ENCODE measurements at regions of chr16 and their contacts with region 1.

Region 1: GRCh38 chr16:11114366-11115164 is 141.4 kb downstream of the SOCS1 start:
- DNase-seq: peak in 4 of 9 experiments; percentile 18 to 70 (median 34)
- ATAC-seq: peak; percentile 72
- H3K4me3 ChIP-seq: peak overlapping the region in 1 of 2 experiments; percentile 11
- H3K4me3 Mint-ChIP-seq: peak overlapping the region; percentile 60
- H3K27ac ChIP-seq: peak overlapping the region in 1 of 2 experiments; percentile 40
- H3K27ac Mint-ChIP-seq: peak overlapping the region; percentile 53
- H3K4me1 ChIP-seq: peaks cover 22% of the 10 kb centered on the region
- H3K4me1 Mint-ChIP-seq: peaks cover 30% of the 10 kb centered on the region
- H3K27me3 ChIP-seq: no peaks in the 10 kb centered on the region
- H3K27me3 Mint-ChIP-seq: no peaks in the 10 kb centered on the region
- CTCF ChIP-seq: no peak

Region 2: DNA sequence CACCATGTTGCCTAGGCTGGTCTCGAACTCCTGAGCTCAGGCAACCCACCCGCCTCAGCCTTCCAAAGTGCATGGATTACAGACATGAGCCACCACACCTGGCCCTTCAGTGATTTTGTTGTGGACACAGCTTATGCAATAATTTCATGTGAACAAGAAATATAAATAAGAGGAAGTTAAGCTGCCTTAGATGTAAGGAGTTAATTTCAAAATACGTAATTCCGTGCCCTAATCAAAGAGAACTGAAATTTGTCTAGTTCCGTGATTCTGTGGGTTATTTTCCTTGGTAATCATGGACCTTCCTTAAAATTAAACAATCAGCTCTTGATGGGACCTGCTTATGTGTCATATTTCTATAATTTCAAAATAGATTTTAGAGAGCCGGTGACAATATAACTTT is 307.9 kb before region 1 on chr16:
- CTCF ChIA-PET with region 1: no interaction called
- POLR2A ChIA-PET with region 1: no interaction called
- intact Hi-C with region 1: no loop called
- DNase-seq: no peak
- ATAC-seq: no peak
- H3K4me3 ChIP-seq: no peak overlapping the region
- H3K4me3 Mint-ChIP-seq: no peak overlapping the region
- H3K27ac ChIP-seq: no peak overlapping the region
- H3K27ac Mint-ChIP-seq: no peak overlapping the region
- H3K4me1 ChIP-seq: no peaks in the 10 kb centered on the region
- H3K4me1 Mint-ChIP-seq: no peaks in the 10 kb centered on the region
- H3K27me3 ChIP-seq: no peaks in the 10 kb centered on the region
- H3K27me3 Mint-ChIP-seq: peaks cover 2% of the 10 kb centered on the region
- CTCF ChIP-seq: no peak

Region 3: GRCh38 chr16:10981697-10982216 is 132.8 kb before region 1 on chr16:
- CTCF ChIA-PET with region 1: no interaction called
- POLR2A ChIA-PET with region 1: no interaction called
- intact Hi-C with region 1: no loop called
- DNase-seq: peak in 3 of 9 experiments; percentile 21 to 34 (median 25)
- ATAC-seq: no peak
- H3K4me3 ChIP-seq: no peak overlapping the region
- H3K4me3 Mint-ChIP-seq: no peak overlapping the region
- H3K27ac ChIP-seq: no peak overlapping the region
- H3K27ac Mint-ChIP-seq: no peak overlapping the region
- H3K4me1 ChIP-seq: no peaks in the 10 kb centered on the region
- H3K4me1 Mint-ChIP-seq: peaks cover 8% of the 10 kb centered on the region
- H3K27me3 ChIP-seq: no peaks in the 10 kb centered on the region
- H3K27me3 Mint-ChIP-seq: no peaks in the 10 kb centered on the region
- CTCF ChIP-seq: no peak

Region 4: DNA sequence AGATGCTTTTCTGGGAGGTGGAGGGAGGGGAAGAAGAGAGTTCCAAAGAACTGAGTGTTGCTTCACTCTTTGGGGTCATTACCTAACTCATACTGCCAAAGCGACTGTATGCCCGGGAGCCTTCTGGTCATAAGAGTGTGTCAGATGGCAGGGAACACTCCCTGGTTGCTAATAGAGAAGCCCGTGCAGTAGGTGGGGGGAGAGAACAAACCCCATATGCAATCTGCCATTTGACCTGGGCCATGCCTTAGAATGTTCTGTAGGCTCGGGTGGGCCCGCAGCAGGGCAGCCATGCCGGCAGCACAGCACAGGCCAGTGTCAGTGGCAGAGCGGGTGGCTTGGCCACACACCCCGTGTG is 20.9 kb after region 1 on chr16:
- CTCF ChIA-PET with region 1: no interaction called
- POLR2A ChIA-PET with region 1: no interaction called
- intact Hi-C with region 1: loop called in 1 of 2 experiments (anchors 2 kb)
- DNase-seq: no peak
- ATAC-seq: no peak
- H3K4me3 ChIP-seq: no peak overlapping the region
- H3K4me3 Mint-ChIP-seq: no peak overlapping the region
- H3K27ac ChIP-seq: no peak overlapping the region
- H3K27ac Mint-ChIP-seq: no peak overlapping the region
- H3K4me1 ChIP-seq: peaks cover 28% of the 10 kb centered on the region
- H3K4me1 Mint-ChIP-seq: peaks cover 42% of the 10 kb centered on the region
- H3K27me3 ChIP-seq: no peaks in the 10 kb centered on the region
- H3K27me3 Mint-ChIP-seq: no peaks in the 10 kb centered on the region
- CTCF ChIP-seq: no peak

Region 5: GRCh38 chr16:11152677-11153331 is 38.2 kb after region 1 on chr16:
- CTCF ChIA-PET with region 1: no interaction called
- POLR2A ChIA-PET with region 1: no interaction called
- intact Hi-C with region 1: no loop called
- DNase-seq: no peak
- ATAC-seq: no peak
- H3K4me3 ChIP-seq: no peak overlapping the region
- H3K4me3 Mint-ChIP-seq: no peak overlapping the region
- H3K27ac ChIP-seq: no peak overlapping the region
- H3K27ac Mint-ChIP-seq: no peak overlapping the region
- H3K4me1 ChIP-seq: peaks cover 4% of the 10 kb centered on the region
- H3K4me1 Mint-ChIP-seq: peaks cover 8% of the 10 kb centered on the region
- H3K27me3 ChIP-seq: no peaks in the 10 kb centered on the region
- H3K27me3 Mint-ChIP-seq: no peaks in the 10 kb centered on the region
- CTCF ChIP-seq: no peak

Measured in CD8-positive, alpha-beta T cell (primary cell).